GM13977 (cell line): ENCODE measurements at regions of chr22 and their contacts with region 1.

Region 1: DNA sequence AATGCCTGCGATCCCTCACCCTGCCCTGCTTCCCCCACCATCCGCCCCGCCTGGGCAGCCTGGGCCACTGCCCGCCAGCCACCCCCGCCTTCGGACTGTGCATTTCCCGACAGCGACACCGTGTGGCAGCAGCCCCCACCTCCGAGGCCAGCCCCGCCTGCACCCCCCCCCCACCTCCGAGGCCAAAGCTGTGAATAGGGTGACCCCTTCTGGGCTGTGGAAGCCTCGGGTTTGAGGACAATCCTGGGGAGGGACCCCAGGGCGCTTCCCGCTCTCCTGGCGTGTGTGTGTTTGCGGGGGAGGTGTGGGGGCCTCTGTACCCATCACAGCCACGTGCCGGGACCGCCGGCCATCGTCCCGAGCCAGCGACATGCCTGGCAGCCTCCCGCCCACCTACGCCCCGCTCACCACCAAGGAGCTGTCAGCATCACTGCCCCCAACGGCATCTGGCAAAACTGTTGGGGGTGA is 33.8 kb upstream of the PPARA start:
- DNase-seq: peak; percentile 97
- CTCF ChIP-seq: peak; percentile 86

Region 2: GRCh38 chr22:46006379-46007002 is 110.0 kb before region 1 on chr22:
- in situ Hi-C with region 1: loop called (anchors 5 kb)
- DNase-seq: peak; percentile 96
- CTCF ChIP-seq: peak; percentile 96